H1 (cell line): ENCODE measurements at regions of chr11 and their contacts with region 1.

Region 1: DNA sequence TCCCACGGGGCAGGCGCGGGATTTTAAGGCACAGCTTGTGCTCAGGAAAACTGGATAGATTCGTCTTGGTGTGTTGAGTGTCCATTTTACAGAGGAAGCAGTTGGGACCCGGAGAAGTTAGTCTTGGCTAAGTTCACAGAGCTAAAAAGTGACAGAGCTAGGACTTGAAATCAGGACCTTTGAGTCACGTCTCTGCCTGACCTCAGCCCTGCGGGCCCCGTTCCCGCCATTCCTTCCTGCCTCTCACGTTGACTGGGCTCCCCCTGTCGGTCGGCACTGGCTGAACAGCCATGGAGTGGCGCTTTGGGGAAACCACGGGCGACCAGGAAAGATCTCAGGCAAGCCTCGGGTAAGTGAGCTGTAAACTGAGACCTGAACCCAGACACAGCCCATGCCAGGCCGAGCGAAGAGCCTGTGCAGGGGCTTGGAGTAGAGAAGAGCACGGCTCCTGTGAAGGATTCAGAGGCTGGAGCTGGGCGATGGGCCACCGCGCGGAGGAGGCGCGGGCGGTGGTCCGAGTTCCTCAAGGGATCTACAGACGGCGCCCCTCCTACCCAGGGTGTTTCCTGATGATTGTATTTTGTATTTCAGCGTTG is 54.1 kb downstream of the WNT11 start:
- DNase-seq: peak; percentile 65 to 95
- H3K4me3 ChIP-seq: peak overlapping the region; percentile 26 to 64 (median 36); a peak in 6 of 8 replicates
- H3K27ac ChIP-seq: no peak overlapping the region
- H3K4me1 ChIP-seq: peaks cover 0 to 3% (median 2%) of the 10 kb centered on the region in 4 experiments; a peak in 2 of 7 replicates
- H3K27me3 ChIP-seq: peaks cover 0 to 14% (median 11%) of the 10 kb centered on the region in 4 experiments; a peak in 5 of 7 replicates
- CTCF ChIP-seq: peak; percentile 94 to 97 (median 97)
- EP300 ChIP-seq: no peak
- POLR2A ChIP-seq: no peak
- RAD21 ChIP-seq: peak; percentile 93 to 96

Region 2: GRCh38 chr11:75802913-75803820 is 349.0 kb before region 1 on chr11:
- CTCF ChIA-PET with region 1: interaction called, 13 read pairs
- POLR2A ChIA-PET with region 1: no interaction called
- DNase-seq: peak; percentile 53 to 91
- H3K4me3 ChIP-seq: no peak overlapping the region
- H3K27ac ChIP-seq: no peak overlapping the region
- H3K4me1 ChIP-seq: 0 out of 7 replicates have a peak, but pooled peaks cover 0 to 2% (median 0%) of the 10 kb centered on the region in 4 experiments
- H3K27me3 ChIP-seq: no peaks in the 10 kb centered on the region
- CTCF ChIP-seq: peak; percentile 79 to 98 (median 91)
- EP300 ChIP-seq: no peak
- POLR2A ChIP-seq: no peak
- RAD21 ChIP-seq: peak; percentile 87 to 91

Region 3: GRCh38 chr11:75896843-75897419 is 255.3 kb before region 1 on chr11:
- CTCF ChIA-PET with region 1: interaction called, 44 read pairs
- POLR2A ChIA-PET with region 1: interaction called, 3 read pairs
- DNase-seq: no peak
- H3K4me3 ChIP-seq: no peak overlapping the region
- H3K27ac ChIP-seq: no peak overlapping the region
- H3K4me1 ChIP-seq: no peaks in the 10 kb centered on the region
- H3K27me3 ChIP-seq: no peaks in the 10 kb centered on the region
- CTCF ChIP-seq: peak in 2 of 3 experiments; percentile 42; a peak in 2 of 4 replicates
- EP300 ChIP-seq: no peak
- POLR2A ChIP-seq: no peak
- RAD21 ChIP-seq: peak; percentile 66 to 77

Region 4: GRCh38 chr11:75903276-75903675 is 248.9 kb before region 1 on chr11:
- CTCF ChIA-PET with region 1: interaction called, 44 read pairs
- POLR2A ChIA-PET with region 1: no interaction called
- DNase-seq: no peak
- H3K4me3 ChIP-seq: no peak overlapping the region
- H3K27ac ChIP-seq: no peak overlapping the region
- H3K4me1 ChIP-seq: no peaks in the 10 kb centered on the region
- H3K27me3 ChIP-seq: no peaks in the 10 kb centered on the region
- CTCF ChIP-seq: no peak
- EP300 ChIP-seq: no peak
- POLR2A ChIP-seq: no peak
- RAD21 ChIP-seq: no peak

Region 5: DNA sequence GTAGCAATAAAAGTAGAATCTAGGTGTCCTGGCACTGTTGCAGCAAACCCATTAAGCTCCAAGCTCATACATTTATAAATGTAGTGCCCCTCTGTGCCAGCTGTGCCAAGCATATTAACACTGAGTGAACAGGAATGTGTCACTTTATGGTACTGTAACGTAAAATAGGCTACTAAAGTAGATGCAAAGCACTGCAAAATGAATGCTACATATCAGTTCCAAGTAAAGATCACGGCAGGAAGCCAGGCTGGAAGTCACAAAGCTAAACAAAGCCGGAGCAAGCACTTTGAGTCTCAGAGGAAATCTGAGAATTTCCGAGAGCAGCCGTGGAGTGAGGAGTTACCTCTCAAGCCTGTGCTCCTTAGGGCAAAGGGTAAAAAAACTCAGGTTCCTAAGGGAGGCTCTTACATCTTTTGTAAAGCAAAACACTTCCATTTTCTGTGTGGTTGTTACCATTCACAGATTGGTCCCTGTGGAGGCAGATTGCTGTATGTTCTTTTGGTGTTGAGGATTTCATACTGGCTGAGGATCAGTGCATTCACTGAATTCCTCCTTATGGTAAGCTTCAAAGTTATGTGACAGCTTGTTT is 31.6 kb before region 1 on chr11:
- CTCF ChIA-PET with region 1: interaction called, 17 read pairs
- POLR2A ChIA-PET with region 1: no interaction called
- DNase-seq: peak in 1 of 2 experiments; percentile 15
- H3K4me3 ChIP-seq: no peak overlapping the region
- H3K27ac ChIP-seq: no peak overlapping the region
- H3K4me1 ChIP-seq: peaks cover 4 to 19% (median 8%) of the 10 kb centered on the region in 4 experiments; a peak in 6 of 7 replicates
- H3K27me3 ChIP-seq: no peaks in the 10 kb centered on the region
- CTCF ChIP-seq: no peak
- EP300 ChIP-seq: no peak
- POLR2A ChIP-seq: no peak
- RAD21 ChIP-seq: no peak

Region 6: GRCh38 chr11:76131671-76132631 is 20.2 kb before region 1 on chr11:
- CTCF ChIA-PET with region 1: interaction called, 21 read pairs
- POLR2A ChIA-PET with region 1: interaction called, 4 read pairs
- DNase-seq: no peak
- H3K4me3 ChIP-seq: no peak overlapping the region
- H3K27ac ChIP-seq: no peak overlapping the region
- H3K4me1 ChIP-seq: no peaks in the 10 kb centered on the region
- H3K27me3 ChIP-seq: no peaks in the 10 kb centered on the region
- CTCF ChIP-seq: no peak
- EP300 ChIP-seq: no peak
- POLR2A ChIP-seq: no peak
- RAD21 ChIP-seq: no peak

Region 7: DNA sequence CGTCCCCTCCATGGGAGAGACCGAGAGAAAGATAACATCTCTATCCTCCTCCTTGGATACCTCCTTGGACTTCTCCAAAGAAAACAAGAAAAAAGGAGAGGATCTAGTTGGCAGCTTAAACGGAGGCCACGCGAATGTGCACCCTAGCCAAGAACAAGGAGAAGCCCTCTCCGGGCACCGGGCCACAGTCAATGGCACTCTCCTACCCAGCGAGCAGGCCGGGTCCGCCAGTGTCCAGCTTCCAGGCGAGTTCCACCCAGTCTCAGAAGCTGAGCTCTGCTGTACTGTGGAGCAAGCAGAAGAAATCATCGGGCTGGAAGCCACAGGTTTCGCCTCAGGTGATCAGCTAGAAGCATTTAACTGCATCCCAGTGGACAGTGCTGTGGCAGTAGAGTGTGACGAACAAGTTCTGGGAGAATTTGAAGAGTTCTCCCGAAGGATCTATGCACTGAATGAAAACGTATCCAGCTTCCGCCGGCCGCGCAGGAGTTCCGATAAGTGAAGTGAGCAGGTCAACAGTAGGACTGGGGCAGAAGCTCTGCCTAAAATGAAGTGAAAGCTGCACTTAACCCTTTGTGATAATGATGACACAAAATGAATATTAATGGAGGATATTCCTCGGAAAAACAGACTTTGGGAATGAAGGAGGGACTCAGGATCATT is 11.1 kb before region 1 on chr11:
- CTCF ChIA-PET with region 1: interaction called, 42 read pairs
- POLR2A ChIA-PET with region 1: interaction called, 4 read pairs
- DNase-seq: no peak
- H3K4me3 ChIP-seq: no peak overlapping the region
- H3K27ac ChIP-seq: no peak overlapping the region
- H3K4me1 ChIP-seq: no peaks in the 10 kb centered on the region
- H3K27me3 ChIP-seq: no peaks in the 10 kb centered on the region
- CTCF ChIP-seq: no peak
- EP300 ChIP-seq: no peak
- POLR2A ChIP-seq: no peak
- RAD21 ChIP-seq: no peak